ENCODE measurements at regions of chr7 and their contacts with region 1.

Region 1: GRCh38 chr7:102412548-102412947 is 16.4 kb downstream of the PRKRIP1 start:
- DNase-seq: peak; percentile 49 to 64 (median 58)
- H3K4me3 ChIP-seq: no peak overlapping the region
- H3K4me3 Mint-ChIP-seq: no peak overlapping the region
- H3K27ac ChIP-seq: no peak overlapping the region
- H3K27ac Mint-ChIP-seq: peak overlapping the region in 2 of 7 donors; percentile 50 to 73
- H3K4me1 ChIP-seq: no peaks in the 10 kb centered on the region
- H3K4me1 Mint-ChIP-seq: peaks cover 10% of the 10 kb centered on the region
- H3K27me3 ChIP-seq: no peaks in the 10 kb centered on the region
- H3K27me3 Mint-ChIP-seq: no peaks in the 10 kb centered on the region
- CTCF ChIP-seq: peak; percentile 86

Region 2: GRCh38 chr7:102236592-102237287 is 175.8 kb before region 1 on chr7:
- intact Hi-C with region 1: no loop called
- DNase-seq: peak in 1 of 3 donors; percentile 15
- H3K4me3 ChIP-seq: no peak overlapping the region
- H3K4me3 Mint-ChIP-seq: no peak overlapping the region
- H3K27ac ChIP-seq: no peak overlapping the region
- H3K27ac Mint-ChIP-seq: no peak overlapping the region
- H3K4me1 ChIP-seq: no peaks in the 10 kb centered on the region
- H3K4me1 Mint-ChIP-seq: no peaks in the 10 kb centered on the region
- H3K27me3 ChIP-seq: no peaks in the 10 kb centered on the region
- H3K27me3 Mint-ChIP-seq: peaks cover 0 to 1% (median 0%) of the 10 kb centered on the region in 3 donors
- CTCF ChIP-seq: peak; percentile 65

Region 3: DNA sequence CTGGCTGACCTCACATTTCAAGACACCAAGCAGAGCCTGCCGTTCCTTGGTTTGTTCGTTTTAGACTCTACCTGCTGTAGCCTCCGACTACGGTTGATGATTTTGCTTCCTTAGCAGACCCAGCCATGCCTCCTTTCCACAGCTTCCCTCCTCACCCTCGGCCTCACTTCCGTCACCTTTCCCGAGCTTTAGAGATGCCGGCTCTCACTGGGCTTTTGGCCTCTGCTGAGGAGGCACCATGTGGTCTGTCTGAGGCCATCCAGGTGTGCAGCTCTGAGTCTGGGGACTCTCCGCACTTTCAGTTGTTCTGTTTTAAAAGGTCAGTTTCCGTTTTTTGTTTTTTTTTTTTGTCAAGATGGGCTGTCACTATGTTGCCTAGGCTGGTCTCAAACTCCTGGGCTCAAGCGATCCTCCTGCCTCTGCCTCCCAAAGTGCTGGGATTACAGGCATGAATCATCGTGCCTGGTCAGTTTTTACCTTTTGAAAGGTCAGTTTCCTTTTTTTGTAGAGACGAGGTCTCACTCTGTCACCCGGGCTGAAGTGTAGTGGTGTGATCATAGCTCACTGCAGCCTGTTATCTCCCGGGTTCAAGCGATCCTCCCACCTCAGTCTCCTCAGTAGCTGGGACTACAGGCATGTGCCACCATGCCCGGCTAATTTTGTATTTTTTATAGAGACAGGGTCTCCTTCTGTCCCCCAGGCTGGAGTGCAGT is 32.6 kb after region 1 on chr7:
- intact Hi-C with region 1: loop called (anchors 5 kb)
- DNase-seq: no peak
- H3K4me3 ChIP-seq: no peak overlapping the region
- H3K4me3 Mint-ChIP-seq: no peak overlapping the region
- H3K27ac ChIP-seq: no peak overlapping the region
- H3K27ac Mint-ChIP-seq: peak overlapping the region in 1 of 7 donors; percentile 48
- H3K4me1 ChIP-seq: peaks cover 0 to 3% of the 10 kb centered on the region in 2 donors
- H3K4me1 Mint-ChIP-seq: peaks cover 4% of the 10 kb centered on the region
- H3K27me3 ChIP-seq: no peaks in the 10 kb centered on the region
- H3K27me3 Mint-ChIP-seq: peaks cover 0 to 4% (median 3%) of the 10 kb centered on the region in 3 donors
- CTCF ChIP-seq: no peak

Region 4: DNA sequence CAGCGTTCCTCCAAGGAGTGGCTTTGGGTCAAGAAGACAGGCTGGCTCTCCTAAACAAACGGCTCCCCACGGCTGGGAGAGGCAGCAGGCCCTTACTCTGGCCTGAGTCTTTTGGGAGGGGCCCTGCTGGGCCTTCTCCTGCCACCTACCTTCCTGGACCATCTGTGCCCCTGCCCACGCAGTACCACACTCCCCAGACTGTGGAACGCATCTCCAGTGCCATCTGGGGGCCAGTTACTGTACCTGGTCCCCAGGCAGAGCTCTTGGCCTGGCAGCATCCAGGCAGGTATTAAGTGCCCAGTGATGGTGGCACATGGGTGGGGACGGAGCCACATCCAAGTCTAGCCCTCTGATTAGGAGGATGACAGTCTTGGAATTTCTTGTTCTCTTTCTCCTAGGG is 37.7 kb after region 1 on chr7:
- intact Hi-C with region 1: loop called (anchors 5 kb)
- DNase-seq: peak; percentile 23 to 47 (median 41)
- H3K4me3 ChIP-seq: no peak overlapping the region
- H3K4me3 Mint-ChIP-seq: no peak overlapping the region
- H3K27ac ChIP-seq: no peak overlapping the region
- H3K27ac Mint-ChIP-seq: peak overlapping the region in 1 of 7 donors; percentile 43
- H3K4me1 ChIP-seq: no peaks in the 10 kb centered on the region
- H3K4me1 Mint-ChIP-seq: peaks cover 4% of the 10 kb centered on the region
- H3K27me3 ChIP-seq: no peaks in the 10 kb centered on the region
- H3K27me3 Mint-ChIP-seq: peaks cover 0 to 1% (median 0%) of the 10 kb centered on the region in 3 donors
- CTCF ChIP-seq: peak; percentile 40

Region 5: DNA sequence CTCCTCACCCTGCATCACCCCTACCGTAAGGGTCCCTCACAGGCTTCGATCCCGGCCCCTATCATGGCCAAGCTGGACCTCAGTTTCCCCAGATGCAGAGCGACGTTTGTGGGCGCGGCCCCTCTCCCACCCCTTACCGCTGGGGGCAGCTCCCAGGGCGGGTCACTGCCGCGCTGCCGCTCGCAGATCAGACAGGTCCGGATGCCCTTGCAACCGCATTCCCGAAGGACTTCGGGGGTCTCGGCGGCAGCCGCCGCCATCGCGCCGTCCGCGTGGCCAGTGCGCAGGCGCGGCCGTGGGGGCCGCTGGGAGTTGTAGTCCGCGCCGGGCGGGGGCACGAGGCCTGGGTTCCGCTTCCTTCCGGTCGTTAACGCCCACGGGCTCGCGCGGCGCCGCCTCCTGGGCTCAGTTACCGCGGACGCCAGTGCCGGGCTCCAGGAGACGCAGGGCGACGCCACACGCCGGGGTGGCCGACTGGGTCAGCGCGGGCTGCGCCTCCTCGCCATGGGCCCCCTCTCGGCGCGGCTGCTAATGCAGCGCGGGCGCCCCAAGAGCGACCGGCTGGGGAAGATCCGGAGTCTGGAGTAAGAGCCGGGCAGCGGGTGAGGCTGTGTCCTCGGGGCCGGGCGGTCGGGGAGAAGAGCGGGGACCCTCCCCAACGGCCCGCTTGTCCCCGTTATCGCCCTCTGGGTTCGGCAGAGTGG is 52.2 kb after region 1 on chr7 and contains the starts of genes ALKBH4 and LRWD1:
- intact Hi-C with region 1: loop called in 1 of 2 experiments (anchors 2 kb)
- DNase-seq: peak; percentile 95
- H3K4me3 ChIP-seq: peak within 1 kb of the TSS; percentile 89 to 100 (median 99)
- H3K4me3 Mint-ChIP-seq: peak within 1 kb of the TSS; percentile 93 to 95
- H3K27ac ChIP-seq: peak within 1 kb of the TSS; percentile 19 to 87
- H3K27ac Mint-ChIP-seq: peak within 1 kb of the TSS in 6 of 7 donors; percentile 72 to 92 (median 84)
- H3K4me1 ChIP-seq: peaks cover 19 to 20% of the 10 kb centered on the region in 2 donors
- H3K4me1 Mint-ChIP-seq: peaks cover 26% of the 10 kb centered on the region
- H3K27me3 ChIP-seq: no peaks in the 10 kb centered on the region
- H3K27me3 Mint-ChIP-seq: peaks cover 0 to 2% (median 0%) of the 10 kb centered on the region in 3 donors
- CTCF ChIP-seq: peak; percentile 45
- polyA plus RNA-seq, gene ALKBH4: 2.9 to 11.8 (median 9.7) TPM
- polyA plus RNA-seq, gene LRWD1: 5.4 to 10.7 (median 6.1) TPM

Measured in CD14-positive monocyte (primary cell).